ENCODE measurements at regions of chr5 and their contacts with region 1.

Region 1: GRCh38 chr5:154405078-154405792 is 40.6 kb upstream of the SAP30L start:
- DNase-seq: peak; percentile 67
- ATAC-seq: peak; percentile 100
- H3K4me3 Mint-ChIP-seq: peak overlapping the region; percentile 77
- H3K27ac Mint-ChIP-seq: no peak overlapping the region
- H3K4me1 Mint-ChIP-seq: peaks cover 7% of the 10 kb centered on the region
- H3K27me3 Mint-ChIP-seq: no peaks in the 10 kb centered on the region
- CTCF ChIP-seq: no peak

Region 2: GRCh38 chr5:153974131-153974812 is 431.0 kb before region 1 on chr5:
- CTCF ChIA-PET with region 1: interaction called, 25 read pairs
- POLR2A ChIA-PET with region 1: no interaction called
- intact Hi-C with region 1: loop called (anchors 1 kb)
- DNase-seq: no peak
- ATAC-seq: no peak
- H3K4me3 Mint-ChIP-seq: no peak overlapping the region
- H3K27ac Mint-ChIP-seq: no peak overlapping the region
- H3K4me1 Mint-ChIP-seq: no peaks in the 10 kb centered on the region
- H3K27me3 Mint-ChIP-seq: peaks cover 10% of the 10 kb centered on the region
- CTCF ChIP-seq: no peak

Region 3: GRCh38 chr5:154179846-154180710 is 225.2 kb before region 1 on chr5:
- CTCF ChIA-PET with region 1: interaction called, 39 read pairs
- POLR2A ChIA-PET with region 1: no interaction called
- intact Hi-C with region 1: loop called (anchors 1 kb)
- DNase-seq: no peak
- ATAC-seq: peak; percentile 93
- H3K4me3 Mint-ChIP-seq: no peak overlapping the region
- H3K27ac Mint-ChIP-seq: no peak overlapping the region
- H3K4me1 Mint-ChIP-seq: peaks cover 15% of the 10 kb centered on the region
- H3K27me3 Mint-ChIP-seq: peaks cover 9% of the 10 kb centered on the region
- CTCF ChIP-seq: no peak

Region 4: DNA sequence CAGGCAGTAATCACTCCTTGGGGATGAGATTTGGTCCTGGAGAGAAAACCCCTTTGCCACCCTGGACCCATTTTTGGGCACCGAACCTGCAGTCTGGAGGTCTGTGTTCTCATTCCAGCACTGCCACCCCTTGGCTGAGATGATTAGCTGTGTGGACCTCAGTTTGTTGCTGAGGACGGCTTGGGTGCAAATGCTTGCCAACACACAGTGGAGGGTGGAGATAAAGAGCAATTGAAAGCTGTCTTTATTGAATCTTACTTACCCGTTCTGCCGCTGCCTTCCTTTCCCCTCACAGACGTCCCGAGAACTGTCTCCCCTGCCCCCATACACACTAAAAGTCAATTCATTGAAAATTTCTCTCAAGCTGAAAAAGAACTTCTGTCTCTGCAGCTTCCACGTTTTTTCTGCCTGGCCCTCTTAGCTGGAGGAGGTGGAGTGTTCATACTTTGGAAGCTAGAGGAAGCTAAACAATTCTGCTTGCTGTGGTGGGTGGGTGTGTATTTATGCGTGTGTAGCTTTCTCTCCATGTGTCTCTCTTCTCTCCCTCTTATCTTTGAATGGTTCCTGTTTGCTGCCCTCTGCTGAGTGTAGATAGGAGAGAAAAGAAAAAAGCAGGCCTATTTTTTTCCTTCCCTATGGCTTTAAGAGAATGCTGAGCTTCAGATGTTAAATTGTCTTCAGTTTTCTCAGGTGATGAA is 208.1 kb before region 1 on chr5:
- CTCF ChIA-PET with region 1: interaction called, 11 read pairs
- POLR2A ChIA-PET with region 1: no interaction called
- intact Hi-C with region 1: no loop called
- DNase-seq: no peak
- ATAC-seq: no peak
- H3K4me3 Mint-ChIP-seq: no peak overlapping the region
- H3K27ac Mint-ChIP-seq: peak overlapping the region; percentile 46
- H3K4me1 Mint-ChIP-seq: peaks cover 56% of the 10 kb centered on the region
- H3K27me3 Mint-ChIP-seq: no peaks in the 10 kb centered on the region
- CTCF ChIP-seq: no peak

Region 5: GRCh38 chr5:154331924-154332323 is 73.3 kb before region 1 on chr5:
- CTCF ChIA-PET with region 1: interaction called, 13 read pairs
- POLR2A ChIA-PET with region 1: no interaction called
- intact Hi-C with region 1: no loop called
- DNase-seq: no peak
- ATAC-seq: no peak
- H3K4me3 Mint-ChIP-seq: no peak overlapping the region
- H3K27ac Mint-ChIP-seq: no peak overlapping the region
- H3K4me1 Mint-ChIP-seq: peaks cover 4% of the 10 kb centered on the region
- H3K27me3 Mint-ChIP-seq: no peaks in the 10 kb centered on the region
- CTCF ChIP-seq: no peak

Region 6: GRCh38 chr5:154384480-154385235 is 20.6 kb before region 1 on chr5:
- CTCF ChIA-PET with region 1: interaction called, 13 read pairs
- POLR2A ChIA-PET with region 1: no interaction called
- intact Hi-C with region 1: loop called (anchors 2 kb)
- DNase-seq: peak; percentile 28
- ATAC-seq: peak; percentile 87
- H3K4me3 Mint-ChIP-seq: peak overlapping the region; percentile 79
- H3K27ac Mint-ChIP-seq: peak overlapping the region; percentile 85
- H3K4me1 Mint-ChIP-seq: peaks cover 33% of the 10 kb centered on the region
- H3K27me3 Mint-ChIP-seq: no peaks in the 10 kb centered on the region
- CTCF ChIP-seq: no peak

Region 7: GRCh38 chr5:154421868-154422267 is 16.6 kb after region 1 on chr5:
- CTCF ChIA-PET with region 1: interaction called, 10 read pairs
- POLR2A ChIA-PET with region 1: no interaction called
- intact Hi-C with region 1: no loop called
- DNase-seq: no peak
- ATAC-seq: peak; percentile 18
- H3K4me3 Mint-ChIP-seq: no peak overlapping the region
- H3K27ac Mint-ChIP-seq: no peak overlapping the region
- H3K4me1 Mint-ChIP-seq: peaks cover 3% of the 10 kb centered on the region
- H3K27me3 Mint-ChIP-seq: no peaks in the 10 kb centered on the region
- CTCF ChIP-seq: no peak

Region 8: GRCh38 chr5:155082401-155082800 is 677.2 kb after region 1 on chr5:
- CTCF ChIA-PET with region 1: no interaction called
- POLR2A ChIA-PET with region 1: no interaction called
- intact Hi-C with region 1: no loop called
- DNase-seq: no peak
- ATAC-seq: no peak
- H3K4me3 Mint-ChIP-seq: no peak overlapping the region
- H3K27ac Mint-ChIP-seq: no peak overlapping the region
- H3K4me1 Mint-ChIP-seq: no peaks in the 10 kb centered on the region
- H3K27me3 Mint-ChIP-seq: peaks cover 12% of the 10 kb centered on the region
- CTCF ChIP-seq: no peak